ENCODE measurements at regions of chr3 and their contacts with region 1.

Region 1: GRCh38 chr3:146218880-146219866 is 31.7 kb downstream of the PLSCR4 start:
- DNase-seq: no peak
- H3K4me3 ChIP-seq: no peak overlapping the region
- H3K27ac ChIP-seq: no peak overlapping the region
- H3K4me1 ChIP-seq: peaks cover 4 to 26% (median 21%) of the 10 kb centered on the region in 4 donors
- H3K27me3 ChIP-seq: no peaks in the 10 kb centered on the region
- CTCF ChIP-seq: peak; percentile 69 to 75 (median 73)
- EP300 ChIP-seq: no peak
- POLR2A ChIP-seq: no peak

Region 2: DNA sequence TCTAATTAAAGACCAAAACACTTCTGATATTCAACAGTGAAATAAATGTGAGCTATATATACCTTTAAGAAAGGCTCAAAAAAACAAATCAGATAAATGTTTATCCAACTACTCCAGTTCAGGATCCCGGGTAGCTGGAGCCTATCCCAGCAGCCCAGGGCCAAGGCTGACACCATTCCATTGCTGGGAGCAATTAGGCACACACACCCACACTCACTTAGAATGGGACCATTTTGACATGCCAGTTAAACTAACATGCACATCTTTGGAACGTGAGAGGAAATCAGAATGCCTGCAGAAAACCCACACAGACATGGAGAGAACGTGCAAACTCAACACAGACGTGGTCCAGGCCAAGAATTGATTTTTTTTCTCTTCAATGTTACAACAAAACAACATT is 61.7 kb after region 1 on chr3:
- intact Hi-C with region 1: loop called (anchors 10 kb)
- DNase-seq: no peak
- H3K4me3 ChIP-seq: no peak overlapping the region
- H3K27ac ChIP-seq: no peak overlapping the region
- H3K4me1 ChIP-seq: peaks cover 6 to 51% (median 43%) of the 10 kb centered on the region in 4 donors
- H3K27me3 ChIP-seq: no peaks in the 10 kb centered on the region
- CTCF ChIP-seq: no peak
- EP300 ChIP-seq: no peak
- POLR2A ChIP-seq: no peak

Region 3: GRCh38 chr3:146326670-146327543 is 107.7 kb after region 1 on chr3:
- intact Hi-C with region 1: loop called (anchors 1 kb)
- DNase-seq: no peak
- H3K4me3 ChIP-seq: no peak overlapping the region
- H3K27ac ChIP-seq: no peak overlapping the region
- H3K4me1 ChIP-seq: peaks cover 0 to 8% (median 6%) of the 10 kb centered on the region in 4 donors
- H3K27me3 ChIP-seq: no peaks in the 10 kb centered on the region
- CTCF ChIP-seq: peak; percentile 58 to 69 (median 69)
- EP300 ChIP-seq: no peak
- POLR2A ChIP-seq: no peak

Region 4: DNA sequence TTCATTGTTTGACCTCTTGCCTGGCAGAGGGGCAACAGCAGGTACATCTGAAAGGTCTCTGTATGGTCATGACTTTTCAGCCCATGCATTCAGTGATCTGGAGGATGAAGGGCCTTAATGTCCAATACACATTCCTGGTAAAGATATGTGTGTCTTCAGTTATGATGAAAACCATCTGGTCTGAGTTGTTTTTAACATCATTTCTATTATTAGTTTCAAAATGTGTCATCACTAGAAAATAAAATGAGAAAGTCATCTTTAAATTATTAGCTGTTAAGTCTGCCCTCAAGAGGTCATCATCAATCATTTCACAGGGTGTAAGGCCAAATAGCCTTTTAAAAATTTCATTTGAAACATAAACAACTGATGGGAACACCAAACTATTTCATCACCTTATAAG is 123.8 kb after region 1 on chr3:
- intact Hi-C with region 1: no loop called
- DNase-seq: no peak
- H3K4me3 ChIP-seq: no peak overlapping the region
- H3K27ac ChIP-seq: peak overlapping the region; percentile 21 to 69 (median 46)
- H3K4me1 ChIP-seq: peaks cover 0 to 45% (median 34%) of the 10 kb centered on the region in 4 donors
- H3K27me3 ChIP-seq: no peaks in the 10 kb centered on the region
- CTCF ChIP-seq: no peak
- EP300 ChIP-seq: no peak
- POLR2A ChIP-seq: no peak

Region 5: GRCh38 chr3:146421889-146422288 is 202.7 kb after region 1 on chr3:
- intact Hi-C with region 1: no loop called
- DNase-seq: no peak
- H3K4me3 ChIP-seq: no peak overlapping the region
- H3K27ac ChIP-seq: no peak overlapping the region
- H3K4me1 ChIP-seq: no peaks in the 10 kb centered on the region
- H3K27me3 ChIP-seq: no peaks in the 10 kb centered on the region
- CTCF ChIP-seq: no peak
- EP300 ChIP-seq: no peak
- POLR2A ChIP-seq: no peak

Region 6: DNA sequence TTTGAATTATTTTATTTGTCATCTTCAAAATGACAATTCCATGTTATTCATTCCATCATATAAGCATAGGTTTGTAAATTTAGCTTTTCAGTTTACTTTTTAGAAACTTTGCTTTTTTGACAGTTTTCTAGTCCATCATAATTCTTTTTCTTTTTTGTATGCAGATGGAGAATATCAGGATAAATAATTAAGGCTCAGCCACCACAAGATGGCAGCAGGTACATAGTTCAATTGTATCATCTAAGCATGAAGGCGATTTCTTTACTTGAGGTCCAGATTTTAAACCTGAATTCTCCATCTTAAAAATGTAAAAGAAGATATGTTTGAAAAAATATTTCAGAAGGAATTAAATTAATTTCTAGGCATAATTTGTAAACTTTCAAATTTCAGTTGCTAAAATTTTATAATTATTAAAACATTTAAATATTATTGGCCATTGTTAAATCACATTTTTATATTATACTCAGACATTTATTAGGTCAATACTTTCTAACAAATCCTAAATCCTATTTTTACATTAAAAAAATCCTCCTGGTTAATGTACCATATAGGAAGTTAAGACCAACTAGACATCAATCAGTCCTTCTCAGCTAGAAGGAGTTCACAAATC is 370.8 kb after region 1 on chr3:
- intact Hi-C with region 1: loop called (anchors 10 kb)
- DNase-seq: no peak
- H3K4me3 ChIP-seq: no peak overlapping the region
- H3K27ac ChIP-seq: no peak overlapping the region
- H3K4me1 ChIP-seq: no peaks in the 10 kb centered on the region
- H3K27me3 ChIP-seq: no peaks in the 10 kb centered on the region
- CTCF ChIP-seq: peak in 2 of 3 experiments; percentile 55 to 59
- EP300 ChIP-seq: no peak
- POLR2A ChIP-seq: no peak

Region 7: DNA sequence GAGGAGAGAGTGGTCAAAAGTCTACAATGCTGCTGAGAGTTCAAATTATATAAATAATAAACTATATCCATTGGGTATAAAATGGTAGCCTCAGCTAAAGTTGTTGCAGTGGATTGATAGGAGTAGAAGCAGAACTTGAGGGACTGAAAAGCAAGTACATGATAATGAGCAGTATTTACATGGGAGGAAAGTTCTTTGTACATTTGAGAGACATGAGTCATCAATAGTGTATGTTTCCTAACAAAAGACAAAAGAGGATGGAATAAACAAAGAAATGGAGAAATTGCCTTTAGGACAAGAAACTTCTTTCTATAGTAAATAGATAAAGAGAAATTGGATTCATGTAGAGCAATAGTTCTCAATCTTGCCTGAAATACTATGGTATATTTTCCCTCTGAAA is 496.0 kb after region 1 on chr3:
- intact Hi-C with region 1: no loop called
- DNase-seq: no peak
- H3K4me3 ChIP-seq: no peak overlapping the region
- H3K27ac ChIP-seq: no peak overlapping the region
- H3K4me1 ChIP-seq: no peaks in the 10 kb centered on the region
- H3K27me3 ChIP-seq: no peaks in the 10 kb centered on the region
- CTCF ChIP-seq: no peak
- EP300 ChIP-seq: no peak
- POLR2A ChIP-seq: no peak